B cell (primary cell): ENCODE measurements at regions of chr17 and their contacts with region 1.

Region 1: GRCh38 chr17:5584383-5585286 is at the start of gene NLRP1:
- DNase-seq: peak; percentile 91
- ATAC-seq: peak; percentile 94
- H3K4me3 ChIP-seq: peak within 1 kb of the TSS; percentile 77 to 94 (median 92)
- H3K4me3 Mint-ChIP-seq: peak within 1 kb of the TSS; percentile 97
- H3K27ac ChIP-seq: peak within 1 kb of the TSS; percentile 86 to 95
- H3K27ac Mint-ChIP-seq: peak within 1 kb of the TSS; percentile 98
- H3K4me1 ChIP-seq: peaks cover 45 to 58% of the 10 kb centered on the region in 2 donors
- H3K4me1 Mint-ChIP-seq: peaks cover 66% of the 10 kb centered on the region
- H3K27me3 ChIP-seq: no peaks in the 10 kb centered on the region
- H3K27me3 Mint-ChIP-seq: no peaks in the 10 kb centered on the region
- CTCF ChIP-seq: no peak
- total RNA-seq, gene NLRP1: 141 and 149 TPM in 2 replicates

Region 2: GRCh38 chr17:5555254-5555653 is 29.4 kb before region 1 on chr17:
- CTCF ChIA-PET with region 1: no interaction called
- POLR2A ChIA-PET with region 1: no interaction called
- intact Hi-C with region 1: no loop called
- DNase-seq: no peak
- ATAC-seq: no peak
- H3K4me3 ChIP-seq: no peak overlapping the region
- H3K4me3 Mint-ChIP-seq: no peak overlapping the region
- H3K27ac ChIP-seq: no peak overlapping the region
- H3K27ac Mint-ChIP-seq: no peak overlapping the region
- H3K4me1 ChIP-seq: no peaks in the 10 kb centered on the region
- H3K4me1 Mint-ChIP-seq: no peaks in the 10 kb centered on the region
- H3K27me3 ChIP-seq: no peaks in the 10 kb centered on the region
- H3K27me3 Mint-ChIP-seq: no peaks in the 10 kb centered on the region
- CTCF ChIP-seq: no peak

Region 3: DNA sequence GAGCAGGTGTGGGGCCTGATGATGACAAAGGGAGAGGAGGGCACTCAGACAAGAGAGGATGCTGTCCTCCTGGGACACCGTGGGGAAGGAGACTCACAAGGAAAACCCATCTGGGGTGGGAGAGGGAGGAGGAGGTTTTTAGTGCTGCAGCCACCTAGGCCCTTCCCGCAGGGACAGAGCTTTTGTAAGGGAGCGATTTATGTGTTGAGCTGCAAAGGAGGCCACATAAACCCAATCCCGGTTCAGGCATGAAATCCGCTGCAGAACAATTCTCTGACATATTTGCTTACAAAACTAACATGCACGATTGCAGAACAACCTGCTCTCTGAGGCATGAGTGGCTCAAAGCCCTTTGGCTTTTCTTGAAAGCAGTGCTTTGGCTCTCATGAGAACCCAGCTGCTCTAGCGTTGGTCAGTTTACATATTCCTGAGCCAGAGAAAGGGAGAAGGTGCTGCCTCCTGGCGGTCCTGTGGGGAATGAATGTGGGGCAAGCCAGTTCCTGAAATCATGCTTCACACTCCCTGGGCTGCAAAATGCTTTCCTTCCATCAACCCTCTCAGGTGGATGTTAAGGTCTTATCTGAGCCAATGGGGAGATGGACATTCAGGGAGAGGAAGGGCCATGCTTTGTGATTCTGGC is 122.1 kb after region 1 on chr17:
- CTCF ChIA-PET with region 1: interaction called, 38 read pairs
- POLR2A ChIA-PET with region 1: no interaction called
- intact Hi-C with region 1: no loop called
- DNase-seq: peak; percentile 66
- ATAC-seq: peak; percentile 41
- H3K4me3 ChIP-seq: no peak overlapping the region
- H3K4me3 Mint-ChIP-seq: no peak overlapping the region
- H3K27ac ChIP-seq: no peak overlapping the region
- H3K27ac Mint-ChIP-seq: no peak overlapping the region
- H3K4me1 ChIP-seq: no peaks in the 10 kb centered on the region
- H3K4me1 Mint-ChIP-seq: no peaks in the 10 kb centered on the region
- H3K27me3 ChIP-seq: peaks cover 0 to 16% (median 0%) of the 10 kb centered on the region in 4 experiments
- H3K27me3 Mint-ChIP-seq: peaks cover 29% of the 10 kb centered on the region
- CTCF ChIP-seq: peak; percentile 70

Region 4: GRCh38 chr17:6421700-6422604 is 837.3 kb after region 1 on chr17:
- CTCF ChIA-PET with region 1: interaction called, 41 read pairs
- POLR2A ChIA-PET with region 1: no interaction called
- intact Hi-C with region 1: loop called (anchors 1 kb)
- DNase-seq: peak; percentile 74
- ATAC-seq: peak; percentile 51
- H3K4me3 ChIP-seq: no peak overlapping the region
- H3K4me3 Mint-ChIP-seq: no peak overlapping the region
- H3K27ac ChIP-seq: no peak overlapping the region
- H3K27ac Mint-ChIP-seq: no peak overlapping the region
- H3K4me1 ChIP-seq: peaks cover 0 to 4% of the 10 kb centered on the region in 2 donors
- H3K4me1 Mint-ChIP-seq: peaks cover 4% of the 10 kb centered on the region
- H3K27me3 ChIP-seq: peaks cover 0 to 4% (median 0%) of the 10 kb centered on the region in 4 experiments
- H3K27me3 Mint-ChIP-seq: peaks cover 15% of the 10 kb centered on the region
- CTCF ChIP-seq: peak; percentile 81

Region 5: DNA sequence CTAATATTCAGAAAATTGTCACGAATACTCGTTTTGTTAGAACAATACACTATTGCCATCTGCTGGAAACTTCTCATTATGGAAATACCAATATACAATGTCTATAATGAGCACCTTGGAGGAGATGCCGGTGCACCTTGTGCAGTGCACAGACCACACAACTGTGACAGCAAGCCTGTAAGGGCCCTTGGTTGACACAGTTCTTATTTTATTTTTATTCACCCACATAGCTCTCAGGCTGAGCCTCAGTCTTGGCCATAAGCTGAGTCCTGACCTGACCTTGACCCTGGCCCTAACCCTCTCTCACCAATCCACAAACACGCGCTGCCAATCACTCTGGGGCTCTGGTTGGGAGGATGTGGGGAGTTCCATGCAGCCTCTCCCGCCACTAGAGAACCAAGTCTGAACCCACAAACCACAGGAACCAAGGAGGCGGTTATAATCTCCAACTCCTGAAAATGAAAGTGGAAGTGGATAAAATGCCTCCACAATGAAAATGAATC is 842.7 kb after region 1 on chr17:
- CTCF ChIA-PET with region 1: interaction called, 41 read pairs
- POLR2A ChIA-PET with region 1: no interaction called
- intact Hi-C with region 1: loop called (anchors 1 kb)
- DNase-seq: peak; percentile 47
- ATAC-seq: no peak
- H3K4me3 ChIP-seq: no peak overlapping the region
- H3K4me3 Mint-ChIP-seq: peak overlapping the region; percentile 20
- H3K27ac ChIP-seq: no peak overlapping the region
- H3K27ac Mint-ChIP-seq: no peak overlapping the region
- H3K4me1 ChIP-seq: peaks cover 9 to 13% of the 10 kb centered on the region in 2 donors
- H3K4me1 Mint-ChIP-seq: peaks cover 13% of the 10 kb centered on the region
- H3K27me3 ChIP-seq: peaks cover 0 to 6% (median 0%) of the 10 kb centered on the region in 4 experiments
- H3K27me3 Mint-ChIP-seq: peaks cover 12% of the 10 kb centered on the region
- CTCF ChIP-seq: no peak

Region 6: DNA sequence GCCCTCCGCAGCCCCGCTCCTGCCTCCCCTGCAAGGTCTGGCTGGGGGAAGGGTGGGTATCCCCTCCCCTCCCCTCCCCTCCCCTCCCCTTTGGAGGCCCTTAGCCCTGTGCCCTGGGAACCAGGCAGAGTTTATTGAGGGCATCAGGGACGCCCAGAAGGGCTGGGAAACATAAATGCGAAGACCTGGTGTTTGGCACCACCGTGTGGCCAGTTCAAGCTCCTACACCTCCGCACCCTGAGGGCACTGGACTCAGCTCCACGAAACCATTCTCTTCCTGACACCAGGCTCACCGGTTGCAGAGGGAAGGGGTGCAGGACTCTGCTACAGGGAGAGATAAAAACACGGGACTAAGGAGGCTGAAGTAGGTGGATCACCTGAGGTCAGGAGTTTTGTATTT is 851.3 kb after region 1 on chr17:
- CTCF ChIA-PET with region 1: interaction called, 18 read pairs
- POLR2A ChIA-PET with region 1: interaction called, 3 read pairs
- intact Hi-C with region 1: loop called (anchors 1 kb)
- DNase-seq: peak; percentile 74
- ATAC-seq: peak; percentile 86
- H3K4me3 ChIP-seq: no peak overlapping the region
- H3K4me3 Mint-ChIP-seq: no peak overlapping the region
- H3K27ac ChIP-seq: no peak overlapping the region
- H3K27ac Mint-ChIP-seq: peak overlapping the region; percentile 64
- H3K4me1 ChIP-seq: no peaks in the 10 kb centered on the region
- H3K4me1 Mint-ChIP-seq: peaks cover 2% of the 10 kb centered on the region
- H3K27me3 ChIP-seq: peaks cover 0 to 15% (median 6%) of the 10 kb centered on the region in 4 experiments
- H3K27me3 Mint-ChIP-seq: peaks cover 36% of the 10 kb centered on the region
- CTCF ChIP-seq: peak; percentile 84

Region 7: GRCh38 chr17:6443692-6444569 is 859.3 kb after region 1 on chr17 and contains the start of gene PIMREG:
- CTCF ChIA-PET with region 1: interaction called, 5 read pairs
- POLR2A ChIA-PET with region 1: no interaction called
- intact Hi-C with region 1: loop called (anchors 1 kb)
- DNase-seq: peak; percentile 97
- ATAC-seq: peak; percentile 96
- H3K4me3 ChIP-seq: peak within 1 kb of the TSS; percentile 55 to 74 (median 69)
- H3K4me3 Mint-ChIP-seq: peak within 1 kb of the TSS; percentile 84
- H3K27ac ChIP-seq: peak within 1 kb of the TSS in 1 of 2 donors; percentile 58
- H3K27ac Mint-ChIP-seq: peak within 1 kb of the TSS; percentile 80
- H3K4me1 ChIP-seq: peaks cover 5 to 14% of the 10 kb centered on the region in 2 donors
- H3K4me1 Mint-ChIP-seq: peaks cover 12% of the 10 kb centered on the region
- H3K27me3 ChIP-seq: peaks cover 0 to 10% (median 4%) of the 10 kb centered on the region in 4 experiments
- H3K27me3 Mint-ChIP-seq: peaks cover 20% of the 10 kb centered on the region
- CTCF ChIP-seq: no peak
- total RNA-seq, gene PIMREG: not detected in 2 replicates

Region 8: DNA sequence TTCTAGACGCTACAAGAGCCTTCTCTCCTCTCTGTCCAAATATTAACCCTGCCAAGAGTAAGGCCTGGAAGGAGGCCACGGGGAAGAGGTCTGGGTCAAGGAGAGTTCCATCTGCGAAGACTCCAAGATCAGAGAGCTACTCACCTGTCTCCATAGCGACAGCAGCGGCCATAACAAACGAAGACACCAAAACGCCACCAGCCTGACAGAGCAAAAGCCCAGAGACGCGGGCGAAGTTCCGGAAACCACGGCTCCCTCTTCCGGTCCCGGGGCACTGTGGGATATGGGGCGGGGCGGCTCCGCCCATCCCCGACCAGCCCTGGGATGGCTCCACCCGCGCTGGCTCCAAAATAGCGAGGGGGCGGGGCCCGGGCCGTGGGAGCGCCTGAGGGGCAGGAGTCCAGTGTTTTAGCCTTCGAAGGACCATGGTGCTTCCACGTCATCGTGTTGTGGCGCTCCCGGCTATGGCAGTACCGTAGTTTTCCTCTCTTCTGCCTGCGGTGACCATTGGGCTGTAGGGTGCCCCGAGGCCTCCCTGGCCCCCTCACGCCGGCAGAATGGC is 1066.8 kb after region 1 on chr17 and contains the starts of genes C17orf100 and MED31:
- CTCF ChIA-PET with region 1: no interaction called
- POLR2A ChIA-PET with region 1: no interaction called
- intact Hi-C with region 1: loop called (anchors 10 kb)
- DNase-seq: peak; percentile 95
- ATAC-seq: peak; percentile 91
- H3K4me3 ChIP-seq: peak within 1 kb of the TSS; percentile 63 to 96 (median 74)
- H3K4me3 Mint-ChIP-seq: peak within 1 kb of the TSS; percentile 99
- H3K27ac ChIP-seq: peak within 1 kb of the TSS; percentile 96 to 99
- H3K27ac Mint-ChIP-seq: peak within 1 kb of the TSS; percentile 99
- H3K4me1 ChIP-seq: peaks cover 28 to 45% of the 10 kb centered on the region in 2 donors
- H3K4me1 Mint-ChIP-seq: peaks cover 69% of the 10 kb centered on the region
- H3K27me3 ChIP-seq: no peaks in the 10 kb centered on the region
- H3K27me3 Mint-ChIP-seq: no peaks in the 10 kb centered on the region
- CTCF ChIP-seq: no peak
- total RNA-seq, gene C17orf100: 7.7 and 11.6 TPM in 2 replicates
- total RNA-seq, gene MED31: 24.7 and 25.5 TPM in 2 replicates